MCF 10A (cell line): ENCODE measurements at regions of chr3 and their contacts with region 1.

Region 1: GRCh38 chr3:116140100-116140689 is 305.1 kb downstream of the LSAMP start:
- DNase-seq: peak; percentile 41
- H3K4me3 Mint-ChIP-seq: no peak overlapping the region
- H3K27ac Mint-ChIP-seq: no peak overlapping the region
- H3K4me1 Mint-ChIP-seq: no peaks in the 10 kb centered on the region
- H3K27me3 Mint-ChIP-seq: no peaks in the 10 kb centered on the region
- CTCF ChIP-seq: peak; percentile 86

Region 2: DNA sequence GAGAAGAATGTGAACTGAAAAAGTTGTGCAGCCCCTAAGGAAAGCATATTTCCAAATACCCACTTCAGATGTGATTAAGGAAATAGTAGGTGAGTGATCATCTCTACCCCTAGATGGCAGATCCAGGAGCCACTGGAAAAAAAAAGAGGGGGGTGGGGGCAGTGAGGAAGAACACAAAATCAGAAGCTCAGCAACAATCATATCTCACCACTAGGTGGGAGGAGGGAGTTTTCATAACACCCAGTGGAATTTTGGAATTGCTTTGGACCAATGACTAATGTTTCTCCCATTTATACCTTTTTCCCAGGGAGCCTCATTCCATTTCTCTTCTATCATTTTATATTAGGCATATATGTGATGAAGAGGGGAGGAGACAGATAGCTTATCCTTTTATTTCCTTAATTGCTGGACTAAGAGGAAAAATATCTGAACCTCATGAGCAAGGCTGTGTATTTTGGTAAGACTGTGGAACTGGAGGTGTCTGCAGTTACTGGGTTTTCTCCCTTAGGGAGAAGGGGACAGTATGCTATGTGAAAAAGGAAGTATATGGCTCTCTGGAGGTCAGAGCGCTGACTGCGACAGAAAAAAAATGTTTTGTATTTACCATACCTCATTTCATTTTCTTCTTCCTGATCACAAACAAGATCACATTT is 153.5 kb before region 1 on chr3:
- CTCF ChIA-PET with region 1: no interaction called
- POLR2A ChIA-PET with region 1: no interaction called
- intact Hi-C with region 1: loop called (anchors 10 kb)
- DNase-seq: peak; percentile 57
- H3K4me3 Mint-ChIP-seq: no peak overlapping the region
- H3K27ac Mint-ChIP-seq: no peak overlapping the region
- H3K4me1 Mint-ChIP-seq: no peaks in the 10 kb centered on the region
- H3K27me3 Mint-ChIP-seq: no peaks in the 10 kb centered on the region
- CTCF ChIP-seq: no peak

Region 3: GRCh38 chr3:116453666-116454346 is 313.6 kb after region 1 on chr3:
- CTCF ChIA-PET with region 1: no interaction called
- POLR2A ChIA-PET with region 1: no interaction called
- intact Hi-C with region 1: loop called (anchors 1 kb)
- DNase-seq: peak; percentile 7
- H3K4me3 Mint-ChIP-seq: no peak overlapping the region
- H3K27ac Mint-ChIP-seq: no peak overlapping the region
- H3K4me1 Mint-ChIP-seq: no peaks in the 10 kb centered on the region
- H3K27me3 Mint-ChIP-seq: peaks cover 17% of the 10 kb centered on the region
- CTCF ChIP-seq: no peak

Region 4: DNA sequence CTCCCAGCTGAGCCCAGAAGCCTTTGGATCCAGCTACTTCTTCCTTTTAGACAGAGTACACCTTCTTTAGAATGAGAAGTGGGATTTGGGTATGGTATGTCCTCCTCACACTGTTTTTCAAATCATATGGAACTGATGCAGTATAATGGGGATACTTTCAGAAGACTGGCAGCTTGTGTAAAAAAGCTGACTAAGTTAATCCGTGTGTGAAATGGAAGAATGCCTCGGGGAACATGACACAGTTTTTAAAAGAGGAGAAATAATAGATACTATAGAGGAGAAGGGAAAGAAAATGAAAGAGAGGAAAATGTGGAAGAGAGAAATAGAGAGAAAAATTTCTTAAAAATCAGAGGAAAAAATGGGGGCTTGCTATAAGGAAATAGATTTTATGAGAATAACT is 617.1 kb after region 1 on chr3:
- CTCF ChIA-PET with region 1: interaction called, 8 read pairs
- POLR2A ChIA-PET with region 1: no interaction called
- intact Hi-C with region 1: loop called (anchors 1 kb)
- DNase-seq: no peak
- H3K4me3 Mint-ChIP-seq: no peak overlapping the region
- H3K27ac Mint-ChIP-seq: no peak overlapping the region
- H3K4me1 Mint-ChIP-seq: no peaks in the 10 kb centered on the region
- H3K27me3 Mint-ChIP-seq: peaks cover 84% of the 10 kb centered on the region
- CTCF ChIP-seq: no peak

Region 5: GRCh38 chr3:116930786-116931185 is 790.6 kb after region 1 on chr3:
- CTCF ChIA-PET with region 1: no interaction called
- POLR2A ChIA-PET with region 1: no interaction called
- intact Hi-C with region 1: no loop called
- DNase-seq: peak; percentile 34
- H3K4me3 Mint-ChIP-seq: no peak overlapping the region
- H3K27ac Mint-ChIP-seq: no peak overlapping the region
- H3K4me1 Mint-ChIP-seq: peaks cover 7% of the 10 kb centered on the region
- H3K27me3 Mint-ChIP-seq: peaks cover 10% of the 10 kb centered on the region
- CTCF ChIP-seq: no peak